Mammary epithelial cell (primary cell): ENCODE measurements at regions of chr1 and their contacts with region 1.

Region 1: DNA sequence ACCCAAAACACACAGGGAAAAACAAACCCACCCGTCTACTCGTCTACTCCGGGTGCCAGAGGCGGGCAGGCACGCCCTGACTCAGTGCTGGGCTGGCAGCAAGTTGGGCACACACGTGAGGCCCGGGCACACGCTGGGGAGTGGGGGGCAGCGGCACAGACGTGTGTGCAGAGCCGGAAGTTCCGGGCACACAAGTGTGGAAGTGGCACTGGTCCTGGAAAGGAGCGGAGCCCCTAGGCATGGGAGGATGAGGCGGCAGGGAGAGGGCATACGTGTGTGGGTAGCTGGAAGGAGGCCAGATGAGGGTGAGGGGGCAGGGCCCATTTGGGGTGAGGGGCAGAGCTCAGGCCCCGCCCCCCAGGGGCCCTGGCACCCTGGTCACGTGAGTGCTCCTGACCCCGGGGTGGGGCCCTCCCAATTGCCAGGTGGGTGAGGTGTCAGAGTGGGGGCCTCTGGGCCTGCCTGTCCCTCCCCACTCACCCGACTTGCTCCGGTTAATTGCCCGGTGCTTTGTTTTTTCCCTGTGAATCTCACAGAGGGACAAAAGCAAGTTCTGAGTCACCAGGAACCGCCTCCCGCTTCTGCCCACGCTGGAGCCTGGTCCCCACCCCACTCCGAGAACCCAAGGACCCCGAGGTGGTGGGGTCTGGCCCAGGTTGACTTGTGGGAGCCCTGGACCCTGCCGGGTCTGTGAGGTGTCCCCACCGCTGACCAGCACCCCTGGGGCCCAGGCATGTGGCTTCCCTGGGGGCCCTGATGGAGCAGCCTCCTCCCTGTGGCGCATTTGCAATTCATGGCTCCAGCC is 104.8 kb upstream of the CASZ1 start:
- DNase-seq: peak; percentile 64
- H3K4me3 ChIP-seq: peak overlapping the region in 2 of 3 experiments; percentile 30 to 35
- H3K27ac ChIP-seq: peak overlapping the region; percentile 82
- H3K4me1 ChIP-seq: peaks cover 46% of the 10 kb centered on the region
- H3K27me3 ChIP-seq: no peaks in the 10 kb centered on the region
- CTCF ChIP-seq: no peak

Region 2: DNA sequence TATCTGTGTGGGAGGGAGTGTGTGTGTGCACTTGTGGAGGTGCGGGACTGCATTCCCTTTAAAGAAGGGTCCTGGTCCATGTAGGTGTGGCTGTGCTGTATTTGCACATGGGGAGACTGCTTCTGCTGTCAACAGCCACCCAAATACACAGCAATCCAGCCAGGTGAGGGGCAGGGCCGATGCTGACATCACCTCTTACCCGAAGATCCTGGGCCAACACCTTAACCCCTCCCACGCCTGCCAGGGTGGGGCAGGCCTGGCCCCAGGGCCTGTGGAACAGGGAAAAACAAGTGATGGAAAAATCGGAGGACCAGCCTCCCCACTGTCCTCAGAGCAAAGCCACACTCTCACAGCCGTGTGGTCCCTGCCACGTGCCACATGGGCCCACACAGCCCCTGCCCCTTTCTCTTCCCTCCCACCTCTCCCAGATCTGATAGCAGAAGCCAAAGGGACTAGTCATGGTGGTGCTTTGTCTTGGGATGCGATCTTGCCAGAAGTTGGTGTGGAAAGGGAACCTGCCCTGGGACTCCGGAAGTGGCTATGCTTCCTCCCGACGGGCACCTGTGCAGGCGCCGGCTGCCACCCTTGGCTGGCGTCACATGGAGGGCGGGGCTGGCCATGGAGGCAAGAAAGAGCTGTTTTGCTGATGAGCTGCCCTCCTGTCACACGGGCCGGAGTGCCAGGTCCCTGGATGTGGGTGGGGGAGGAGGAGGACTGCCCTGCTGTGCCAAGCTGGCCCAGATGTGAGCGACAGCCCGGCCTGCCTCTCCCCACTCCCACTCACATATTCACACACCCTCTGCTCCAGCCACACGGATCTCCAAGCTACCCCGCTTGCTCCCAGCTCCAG is 97.1 kb before region 1 on chr1:
- CTCF ChIA-PET with region 1: no interaction called
- dilution Hi-C with region 1: no loop called
- in situ Hi-C with region 1: no loop called
- intact Hi-C with region 1: loop called (anchors 5 kb)
- DNase-seq: peak; percentile 82
- H3K4me3 ChIP-seq: peak overlapping the region in 2 of 3 experiments; percentile 13 to 18
- H3K27ac ChIP-seq: peak overlapping the region; percentile 76
- H3K4me1 ChIP-seq: peaks cover 24% of the 10 kb centered on the region
- H3K27me3 ChIP-seq: no peaks in the 10 kb centered on the region
- CTCF ChIP-seq: no peak

Region 3: DNA sequence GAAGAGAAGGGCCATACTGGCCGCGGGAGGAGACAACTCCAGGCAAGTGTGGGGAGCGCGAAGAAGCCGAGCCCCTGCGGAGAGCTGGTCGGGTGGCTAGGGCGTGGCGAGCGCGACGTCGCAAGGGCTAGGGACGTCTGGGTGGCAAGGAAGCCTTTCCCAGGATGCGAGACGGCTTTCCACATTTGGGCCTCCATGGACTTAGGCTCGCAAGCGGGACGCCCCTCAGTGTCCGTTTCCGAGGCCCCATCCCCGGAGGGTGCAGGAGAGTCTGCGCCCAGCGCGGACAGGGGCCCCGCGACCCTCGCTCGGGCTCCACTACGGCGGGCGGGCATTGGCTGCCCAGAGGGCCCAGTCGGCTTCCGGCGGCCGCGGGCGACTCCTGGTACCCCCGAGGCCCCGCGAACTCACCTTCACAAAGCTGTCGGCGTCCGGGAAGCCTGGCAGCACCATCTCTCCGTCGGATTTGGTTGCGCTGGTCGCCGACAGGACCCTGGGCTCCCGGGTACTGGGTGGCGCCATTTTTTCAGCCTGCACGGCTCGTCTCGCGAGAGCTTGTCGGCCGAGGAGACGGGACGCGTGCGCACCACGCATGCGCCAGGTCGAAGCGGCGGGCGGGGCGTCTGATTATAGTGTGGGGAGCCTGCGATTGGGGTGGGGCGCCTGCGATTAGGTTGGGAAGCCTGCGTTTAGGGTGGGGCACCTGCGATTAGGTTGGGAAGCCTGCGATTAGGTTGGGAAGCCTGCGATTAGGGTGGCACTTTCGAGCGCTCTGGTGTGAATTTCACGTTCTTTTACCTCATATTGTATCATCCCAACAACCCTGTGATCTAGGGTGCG is 198.2 kb after region 1 on chr1 and contains the start of gene EXOSC10:
- CTCF ChIA-PET with region 1: no interaction called
- dilution Hi-C with region 1: no loop called
- in situ Hi-C with region 1: no loop called
- intact Hi-C with region 1: no loop called
- DNase-seq: peak; percentile 83
- H3K4me3 ChIP-seq: peak within 1 kb of the TSS; percentile 77 to 97 (median 93)
- H3K27ac ChIP-seq: peak within 1 kb of the TSS; percentile 82
- H3K4me1 ChIP-seq: no peaks in the 10 kb centered on the region
- H3K27me3 ChIP-seq: no peaks in the 10 kb centered on the region
- CTCF ChIP-seq: no peak
- total RNA-seq, gene EXOSC10: 62.0 to 66.6 TPM